GM10248 (cell line): ENCODE measurements at regions of chr14 and their contacts with region 1.

Region 1: DNA sequence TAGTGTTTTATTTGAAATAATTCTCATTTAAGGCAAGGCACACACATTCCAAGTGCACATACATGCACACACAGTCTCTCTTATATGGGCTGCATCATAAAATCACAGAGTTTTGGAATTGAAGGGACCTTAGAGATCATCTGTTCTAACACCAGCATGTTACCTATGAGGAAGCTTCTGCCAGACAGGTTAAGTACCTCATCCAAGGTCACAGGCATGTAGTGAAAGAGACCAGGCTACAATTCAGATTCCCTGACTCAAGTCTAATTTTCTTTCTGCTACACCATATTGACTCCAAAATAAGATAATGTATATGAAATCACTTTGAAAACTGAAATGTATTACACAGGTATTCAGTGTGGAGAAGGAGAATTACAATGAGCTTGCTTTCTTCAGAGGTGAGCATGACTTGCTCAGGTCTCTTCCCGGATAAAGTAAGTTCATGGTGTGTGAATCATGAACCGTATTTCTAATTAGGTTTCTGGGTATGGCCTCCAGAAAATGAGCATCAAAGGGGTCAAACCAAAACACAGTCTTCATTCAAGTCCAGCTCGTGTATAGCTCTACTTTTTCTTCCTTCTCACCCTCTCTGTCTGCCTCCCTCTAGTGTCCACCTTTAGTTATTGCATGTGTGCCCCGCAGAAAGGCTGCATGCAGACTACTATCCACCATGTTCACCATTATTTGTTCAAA is 411.9 kb downstream of the FUT8 start:
- DNase-seq: peak; percentile 75
- CTCF ChIP-seq: peak; percentile 83

Region 2: GRCh38 chr14:65164068-65164824 is 660.2 kb before region 1 on chr14:
- CTCF ChIA-PET with region 1: interaction called, 56 read pairs
- POLR2A ChIA-PET with region 1: no interaction called
- DNase-seq: peak; percentile 56
- CTCF ChIP-seq: peak; percentile 65

Region 3: DNA sequence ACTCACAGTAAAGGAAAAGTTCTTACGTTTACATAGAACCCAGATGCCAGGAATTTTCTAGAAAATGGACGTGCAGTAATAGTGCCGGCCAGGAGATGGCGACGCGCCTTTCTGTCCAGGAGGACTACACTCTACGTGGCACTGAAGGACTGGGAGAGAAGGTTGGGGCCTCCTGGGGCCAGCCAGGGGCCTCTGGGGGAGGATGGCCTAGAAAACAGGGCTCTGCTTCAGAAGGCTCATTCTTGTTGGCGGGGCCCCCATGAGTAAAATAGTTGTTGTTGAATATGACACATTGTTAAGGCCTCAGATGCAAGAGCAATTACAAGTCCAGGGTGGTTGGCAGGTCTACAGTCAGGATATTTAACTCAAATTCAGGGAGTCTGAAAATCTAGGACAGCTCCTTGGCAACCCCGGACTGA is 602.0 kb before region 1 on chr14:
- CTCF ChIA-PET with region 1: interaction called, 10 read pairs
- POLR2A ChIA-PET with region 1: no interaction called
- DNase-seq: peak; percentile 68
- CTCF ChIP-seq: peak; percentile 87

Region 4: DNA sequence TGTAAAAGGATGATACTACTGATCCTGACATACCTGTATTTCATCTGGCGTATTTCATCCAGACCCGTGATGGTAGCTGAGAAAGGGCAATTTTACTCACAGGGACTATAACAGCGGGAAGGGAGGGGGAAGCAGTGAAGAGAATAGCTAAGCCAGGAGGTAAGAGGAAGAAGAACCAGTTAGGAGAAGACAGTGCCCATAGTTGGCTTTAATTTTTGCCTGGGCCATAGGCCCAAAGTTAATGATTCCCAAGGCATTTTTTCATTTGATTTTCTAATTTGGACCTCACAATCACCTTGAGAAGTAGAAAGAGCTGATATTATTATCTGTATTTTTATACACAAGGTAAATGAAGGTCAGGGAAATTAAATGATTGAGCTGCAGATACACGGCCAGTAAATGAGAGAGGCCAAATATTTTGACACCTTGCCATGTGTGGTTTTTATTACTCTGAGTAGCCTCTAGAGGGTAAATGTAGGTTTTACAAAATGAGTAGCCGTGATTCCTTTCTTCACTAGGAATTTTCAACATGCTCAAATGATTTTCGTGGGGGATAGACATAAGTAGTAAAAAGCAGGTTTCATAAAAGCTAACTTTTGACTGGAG is 29.7 kb before region 1 on chr14:
- CTCF ChIA-PET with region 1: interaction called, 11 read pairs
- POLR2A ChIA-PET with region 1: no interaction called
- DNase-seq: no peak
- CTCF ChIP-seq: no peak

Region 5: DNA sequence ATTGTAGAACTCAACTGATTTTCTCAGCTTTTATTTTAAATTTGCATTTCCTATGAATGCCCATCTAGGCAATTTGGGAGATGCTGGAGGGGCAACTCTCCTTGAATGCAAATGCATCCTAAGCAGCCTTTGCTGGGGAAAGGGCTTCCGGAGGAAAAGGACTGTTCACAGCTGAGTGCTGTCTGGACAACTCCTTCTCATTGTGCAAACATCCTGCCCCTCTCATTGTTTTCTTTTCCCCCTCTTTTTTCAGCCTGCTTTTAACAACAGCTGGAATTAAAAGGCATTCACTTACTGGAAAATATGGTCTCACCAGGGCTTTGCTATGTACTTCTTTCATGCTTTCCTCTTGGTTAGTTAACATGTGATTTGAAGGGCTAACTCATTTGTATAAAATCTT is 14.1 kb before region 1 on chr14:
- CTCF ChIA-PET with region 1: interaction called, 59 read pairs
- POLR2A ChIA-PET with region 1: no interaction called
- DNase-seq: no peak
- CTCF ChIP-seq: no peak

Region 6: DNA sequence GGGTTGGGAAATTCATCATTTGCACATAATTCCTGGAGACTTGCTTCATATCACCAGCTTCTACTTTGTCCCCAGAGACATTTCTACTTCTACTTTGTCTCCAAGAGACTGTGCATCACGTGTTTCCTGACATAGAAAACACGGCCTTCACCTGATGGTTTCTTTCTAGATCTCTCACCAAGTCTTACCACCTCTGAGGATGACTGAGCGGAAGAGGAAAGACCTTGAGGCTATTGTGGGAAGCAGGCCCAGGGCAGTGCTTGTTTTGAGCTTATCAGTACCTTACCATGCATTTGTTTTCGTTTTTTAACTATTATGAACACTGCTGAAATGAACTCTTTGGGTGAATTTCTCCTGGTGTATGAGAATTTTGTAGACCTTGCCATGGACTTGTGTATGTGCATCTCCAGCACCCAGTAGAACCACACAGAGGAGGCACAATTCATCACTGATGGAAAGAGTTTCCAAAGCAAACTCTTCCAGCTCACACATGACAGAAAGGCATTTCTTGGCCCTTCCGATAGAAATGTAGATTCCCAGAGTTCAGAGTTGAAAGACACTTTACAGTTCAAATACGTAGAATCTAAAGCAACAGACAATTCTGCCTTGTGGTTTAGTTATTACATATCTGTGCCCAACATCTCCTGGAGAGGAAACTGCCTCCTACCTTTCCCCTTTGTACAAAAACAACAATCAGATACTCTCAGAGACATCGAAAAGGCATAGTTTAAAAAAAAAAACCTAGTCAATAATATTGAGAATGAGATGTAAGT is 22.8 kb after region 1 on chr14:
- CTCF ChIA-PET with region 1: interaction called, 27 read pairs
- POLR2A ChIA-PET with region 1: no interaction called
- DNase-seq: peak; percentile 42
- CTCF ChIP-seq: no peak

Region 7: GRCh38 chr14:65860956-65861611 is 36.7 kb after region 1 on chr14:
- CTCF ChIA-PET with region 1: no interaction called
- POLR2A ChIA-PET with region 1: no interaction called
- DNase-seq: no peak
- CTCF ChIP-seq: no peak

Region 8: GRCh38 chr14:66003082-66003725 is 178.8 kb after region 1 on chr14:
- CTCF ChIA-PET with region 1: no interaction called
- POLR2A ChIA-PET with region 1: no interaction called
- DNase-seq: no peak
- CTCF ChIP-seq: no peak